ENCODE measurements at regions of chr2 and their contacts with region 1.

Region 1: DNA sequence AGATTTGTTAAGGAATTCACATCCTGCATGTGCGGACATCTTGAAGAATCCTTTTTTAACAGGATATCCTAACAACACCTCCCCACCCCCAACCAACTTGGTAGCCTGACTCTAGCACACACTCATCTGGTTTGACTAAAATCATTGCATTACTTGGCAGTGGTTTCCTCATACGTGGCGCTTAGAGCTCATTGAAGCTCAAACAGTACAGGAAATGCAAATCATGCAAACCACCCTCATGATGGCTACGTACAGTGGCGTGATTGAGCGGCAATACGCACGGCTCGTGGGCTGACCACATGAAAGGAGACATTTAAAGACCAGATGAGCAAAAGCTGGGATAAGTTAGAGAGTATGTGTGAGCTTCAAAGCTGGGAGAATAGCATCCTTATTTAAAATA is 336.2 kb downstream of the ZEB2 start:
- DNase-seq: peak; percentile 74
- H3K4me3 Mint-ChIP-seq: peak overlapping the region; percentile 50
- H3K27ac Mint-ChIP-seq: peak overlapping the region; percentile 89
- H3K4me1 Mint-ChIP-seq: peaks cover 37% of the 10 kb centered on the region
- H3K27me3 Mint-ChIP-seq: no peaks in the 10 kb centered on the region

Region 2: DNA sequence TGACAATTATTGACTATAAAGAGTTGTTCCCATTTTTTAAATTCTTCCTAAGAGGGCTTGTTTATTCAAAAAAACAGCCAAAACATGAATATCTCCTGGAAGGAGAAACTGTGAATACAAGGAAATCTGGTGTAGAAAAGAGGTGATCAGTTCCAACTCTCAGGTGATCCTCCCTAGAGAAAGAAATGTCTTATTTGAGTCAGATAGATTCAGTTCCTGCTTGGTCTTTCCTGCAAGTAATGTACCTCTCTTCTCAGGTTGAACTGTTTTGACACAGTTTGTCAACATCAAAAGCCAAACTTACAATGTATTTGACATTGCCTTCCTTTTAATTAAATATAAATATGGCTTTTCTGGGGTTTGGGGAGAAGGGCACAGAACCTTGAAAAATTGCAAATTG is 487.1 kb before region 1 on chr2:
- intact Hi-C with region 1: loop called (anchors 2 kb)
- DNase-seq: no peak
- H3K4me3 Mint-ChIP-seq: no peak overlapping the region
- H3K27ac Mint-ChIP-seq: no peak overlapping the region
- H3K4me1 Mint-ChIP-seq: peaks cover 27% of the 10 kb centered on the region
- H3K27me3 Mint-ChIP-seq: no peaks in the 10 kb centered on the region

Region 3: DNA sequence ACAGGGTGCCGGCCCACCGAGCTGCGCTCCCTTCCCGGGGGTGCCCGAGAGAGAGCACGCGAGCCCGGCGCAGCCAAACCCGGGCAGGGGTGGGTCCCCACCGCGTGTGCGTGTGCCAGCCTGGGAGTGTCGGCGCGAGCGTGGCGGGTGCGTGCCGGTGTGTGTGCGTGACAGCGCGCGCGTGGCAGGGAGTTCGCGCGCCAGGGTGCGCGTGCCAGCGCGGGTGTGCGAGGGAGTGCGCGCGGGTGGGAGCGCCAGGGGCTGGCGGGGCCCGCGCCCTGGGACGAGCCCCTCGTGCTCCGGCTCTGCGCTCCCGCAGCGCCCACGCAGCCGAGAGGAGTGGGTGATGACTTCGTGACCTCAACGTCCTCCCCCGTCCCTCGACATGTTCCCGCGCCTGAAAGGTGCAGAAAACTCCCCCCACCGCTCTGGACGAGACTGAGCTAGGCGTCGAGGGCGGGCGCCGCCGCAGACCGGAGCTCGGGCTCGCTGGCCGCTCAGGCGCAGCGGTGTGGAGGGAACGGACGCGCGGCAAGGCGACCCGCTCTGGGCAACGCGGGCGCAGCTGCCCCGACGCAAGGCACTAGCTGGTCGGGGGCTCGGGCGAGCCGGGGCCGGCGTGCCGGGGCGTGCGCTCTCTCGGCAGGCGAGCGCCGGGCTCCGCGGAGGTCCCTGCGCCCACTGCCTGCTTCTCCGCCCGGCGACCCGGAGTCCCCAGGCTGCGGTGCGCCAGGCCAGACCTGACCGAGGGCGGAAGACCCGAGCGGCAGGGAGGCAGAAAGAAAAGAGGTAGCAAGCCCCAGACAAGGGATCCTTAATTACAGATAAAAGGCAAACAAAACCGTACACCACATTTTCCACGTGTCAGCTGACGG is 246.6 kb before region 1 on chr2:
- intact Hi-C with region 1: loop called (anchors 10 kb)
- DNase-seq: no peak
- H3K4me3 Mint-ChIP-seq: peak overlapping the region; percentile 70
- H3K27ac Mint-ChIP-seq: no peak overlapping the region
- H3K4me1 Mint-ChIP-seq: peaks cover 14% of the 10 kb centered on the region
- H3K27me3 Mint-ChIP-seq: peaks cover 68% of the 10 kb centered on the region

Region 4: GRCh38 chr2:144230448-144231085 is 46.8 kb after region 1 on chr2:
- intact Hi-C with region 1: loop called (anchors 1 kb)
- DNase-seq: no peak
- H3K4me3 Mint-ChIP-seq: no peak overlapping the region
- H3K27ac Mint-ChIP-seq: no peak overlapping the region
- H3K4me1 Mint-ChIP-seq: peaks cover 58% of the 10 kb centered on the region
- H3K27me3 Mint-ChIP-seq: no peaks in the 10 kb centered on the region

Region 5: DNA sequence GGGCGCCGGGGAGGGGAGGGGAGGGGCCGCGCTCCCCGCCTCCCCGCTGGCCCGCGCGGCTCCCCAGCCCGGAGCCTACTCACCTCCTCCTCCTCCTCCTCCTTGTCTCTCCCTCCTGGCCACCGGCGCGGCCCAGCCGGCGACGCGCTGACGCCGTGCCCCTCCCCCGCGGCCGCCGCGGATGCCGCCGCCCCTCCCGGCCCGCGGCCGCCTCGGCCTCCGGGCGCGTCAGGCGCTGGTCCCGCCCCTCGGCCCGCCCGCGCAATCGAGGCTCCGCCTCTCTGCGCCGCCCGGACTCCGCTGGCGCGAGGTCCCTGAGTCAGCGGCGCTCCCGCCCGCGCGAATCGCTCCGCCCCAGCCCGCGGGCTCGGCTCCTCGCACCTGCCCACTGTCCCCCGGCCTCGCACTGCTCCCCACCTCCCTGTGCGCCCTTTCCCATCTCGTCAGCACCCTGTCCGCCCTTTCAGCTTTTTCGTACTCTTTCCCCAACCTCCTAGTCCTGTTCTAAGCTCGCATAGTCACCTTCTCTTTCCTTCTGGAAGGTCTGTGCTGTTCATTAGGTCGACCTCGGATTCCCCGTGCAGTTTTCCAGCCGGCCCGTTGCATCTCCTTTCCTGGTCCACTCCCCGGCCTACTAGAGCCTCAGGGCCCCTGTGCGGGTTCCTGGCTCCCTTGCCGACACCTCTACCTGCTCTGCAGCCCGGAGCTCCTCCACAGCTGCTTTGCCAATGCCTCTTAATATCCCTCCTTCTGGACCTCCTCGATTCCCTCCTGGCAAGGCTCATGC is 148.8 kb after region 1 on chr2:
- intact Hi-C with region 1: loop called (anchors 1 kb)
- DNase-seq: peak; percentile 91
- H3K4me3 Mint-ChIP-seq: peak overlapping the region; percentile 85
- H3K27ac Mint-ChIP-seq: peak overlapping the region; percentile 98
- H3K4me1 Mint-ChIP-seq: peaks cover 48% of the 10 kb centered on the region
- H3K27me3 Mint-ChIP-seq: no peaks in the 10 kb centered on the region

Region 6: DNA sequence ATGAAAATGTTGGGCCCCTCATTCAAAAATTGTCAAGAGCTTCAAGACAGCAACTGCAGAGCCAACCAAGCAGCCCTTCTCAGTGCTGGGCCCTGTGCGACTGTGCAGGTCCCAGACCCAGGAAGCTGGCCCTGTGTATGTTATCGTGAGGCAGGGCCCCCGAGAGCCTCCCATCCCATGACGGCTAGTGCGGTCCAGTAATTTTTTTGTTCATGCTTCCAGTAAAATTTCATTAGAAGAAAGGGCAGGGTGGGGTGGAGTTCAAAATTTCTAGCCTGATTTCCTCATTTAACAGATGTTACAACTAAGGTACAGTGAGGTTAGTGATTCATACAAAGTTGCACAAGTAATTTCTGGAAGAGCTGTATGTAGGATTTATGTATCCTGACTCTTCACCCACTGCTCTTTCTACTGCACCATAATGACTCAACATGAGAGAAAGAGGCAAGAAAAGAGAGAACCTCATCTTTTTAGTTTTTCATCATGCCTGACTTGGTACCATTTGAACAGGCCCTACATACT is 230.7 kb after region 1 on chr2:
- intact Hi-C with region 1: loop called (anchors 5 kb)
- DNase-seq: no peak
- H3K4me3 Mint-ChIP-seq: no peak overlapping the region
- H3K27ac Mint-ChIP-seq: peak overlapping the region; percentile 55
- H3K4me1 Mint-ChIP-seq: peaks cover 29% of the 10 kb centered on the region
- H3K27me3 Mint-ChIP-seq: no peaks in the 10 kb centered on the region

Measured in activated T-helper 1 cell treated with anti-CD3 and anti-CD28 coated beads, Interleukin-12 subunit alpha, Interleukin-12 subunit beta, Interleukin-2, Interleukin-4 antibody, amounts not matched to agents 30 ng/mL and 10 ng/mL and 1 ng/mL, durations not matched to agents 14 hours and 24 hours and 36 hours (primary cell).